ENCODE measurements at regions of chr5 and their contacts with region 1.

Region 1: GRCh38 chr5:122311961-122312590 is at the start of gene SNCAIP:
- DNase-seq: peak; percentile 59 to 84
- ATAC-seq: peak; percentile 65
- H3K4me3 ChIP-seq: peak within 1 kb of the TSS; percentile 69 to 81
- H3K27ac ChIP-seq: peak within 1 kb of the TSS; percentile 76
- H3K4me1 ChIP-seq: no peaks in the 10 kb centered on the region
- H3K27me3 ChIP-seq: no peaks in the 10 kb centered on the region
- total RNA-seq, gene SNCAIP: 9.7 to 14.7 TPM

Region 2: DNA sequence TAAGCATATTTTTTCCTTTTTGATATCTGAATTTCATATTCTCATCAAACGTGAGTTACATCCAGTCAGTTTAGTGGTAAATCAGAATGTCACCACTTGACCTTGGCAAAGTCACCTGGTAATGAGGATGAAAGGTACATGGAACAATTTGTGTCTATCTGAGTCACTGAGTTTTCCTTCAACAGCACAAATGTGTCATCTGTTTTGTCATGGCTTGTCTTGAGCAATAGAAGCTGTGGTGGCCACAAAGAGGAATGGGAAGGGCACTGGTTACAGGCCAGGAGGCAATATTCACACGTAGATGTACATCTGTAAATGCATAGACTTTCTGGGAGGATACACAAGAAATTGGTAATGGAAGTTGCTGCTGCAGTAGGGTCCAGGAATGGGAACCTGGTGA is 191.1 kb before region 1 on chr5:
- intact Hi-C with region 1: no loop called
- DNase-seq: no peak
- ATAC-seq: no peak
- H3K4me3 ChIP-seq: no peak overlapping the region
- H3K27ac ChIP-seq: no peak overlapping the region
- H3K4me1 ChIP-seq: peaks cover 0 to under 1% of the 10 kb centered on the region in 2 donors
- H3K27me3 ChIP-seq: no peaks in the 10 kb centered on the region

Region 3: GRCh38 chr5:122192497-122193496 is 119.3 kb before region 1 on chr5:
- intact Hi-C with region 1: loop called (anchors 5 to 10 kb)
- DNase-seq: no peak
- ATAC-seq: peak; percentile 68
- H3K4me3 ChIP-seq: no peak overlapping the region
- H3K27ac ChIP-seq: no peak overlapping the region
- H3K4me1 ChIP-seq: no peaks in the 10 kb centered on the region
- H3K27me3 ChIP-seq: no peaks in the 10 kb centered on the region

Region 4: DNA sequence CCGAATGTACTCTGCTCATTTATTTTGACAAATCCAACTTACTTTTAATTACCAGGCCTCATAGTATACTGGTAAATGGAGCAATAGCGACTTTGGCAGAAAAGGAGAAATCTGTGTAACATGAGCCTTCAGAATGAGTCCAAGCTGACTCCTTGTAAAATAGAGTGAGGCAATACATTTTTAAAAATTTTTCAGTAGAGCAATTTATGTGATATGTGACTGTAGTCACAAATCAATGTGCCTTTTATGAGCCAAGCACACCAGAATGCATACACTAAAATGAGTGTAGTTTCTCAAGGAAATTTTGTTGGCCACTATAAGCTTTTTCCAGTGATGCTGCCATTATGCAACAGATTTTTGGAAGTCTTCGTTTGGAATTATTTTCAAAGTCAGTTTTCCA is 73.7 kb after region 1 on chr5:
- intact Hi-C with region 1: loop called in 1 of 2 experiments (anchors 5 kb)
- DNase-seq: no peak
- ATAC-seq: peak; percentile 88
- H3K4me3 ChIP-seq: no peak overlapping the region
- H3K27ac ChIP-seq: no peak overlapping the region
- H3K4me1 ChIP-seq: peaks cover 0 to 3% of the 10 kb centered on the region in 2 donors
- H3K27me3 ChIP-seq: no peaks in the 10 kb centered on the region

Region 5: GRCh38 chr5:122415030-122415800 is 103.1 kb after region 1 on chr5:
- intact Hi-C with region 1: loop called in 1 of 2 experiments (anchors 10 kb)
- DNase-seq: peak in 1 of 2 donors; percentile 59
- ATAC-seq: peak; percentile 87
- H3K4me3 ChIP-seq: no peak overlapping the region
- H3K27ac ChIP-seq: no peak overlapping the region
- H3K4me1 ChIP-seq: no peaks in the 10 kb centered on the region
- H3K27me3 ChIP-seq: no peaks in the 10 kb centered on the region

Region 6: DNA sequence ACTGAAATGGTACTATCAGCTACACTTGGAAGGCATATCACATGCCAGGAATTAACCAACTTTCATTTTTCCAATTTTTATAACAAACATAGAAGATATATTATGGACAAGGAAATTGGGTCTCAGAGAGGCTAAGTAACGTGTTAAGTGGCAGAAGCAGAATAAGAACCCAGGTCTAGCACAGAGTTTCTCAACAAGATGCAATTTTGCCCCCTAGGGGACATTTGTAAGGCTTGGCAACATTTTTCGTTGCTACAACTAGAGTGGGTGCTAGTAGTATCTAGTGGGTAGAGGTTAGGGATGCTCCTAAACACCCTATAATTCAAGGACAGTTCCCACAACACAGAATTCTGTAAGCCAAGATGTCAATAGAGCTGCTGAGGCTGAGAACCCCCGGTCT is 180.6 kb after region 1 on chr5:
- intact Hi-C with region 1: loop called in 1 of 2 experiments (anchors 5 kb)
- DNase-seq: no peak
- ATAC-seq: no peak
- H3K4me3 ChIP-seq: no peak overlapping the region
- H3K27ac ChIP-seq: no peak overlapping the region
- H3K4me1 ChIP-seq: peaks cover 0 to 1% of the 10 kb centered on the region in 2 donors
- H3K27me3 ChIP-seq: no peaks in the 10 kb centered on the region

Region 7: DNA sequence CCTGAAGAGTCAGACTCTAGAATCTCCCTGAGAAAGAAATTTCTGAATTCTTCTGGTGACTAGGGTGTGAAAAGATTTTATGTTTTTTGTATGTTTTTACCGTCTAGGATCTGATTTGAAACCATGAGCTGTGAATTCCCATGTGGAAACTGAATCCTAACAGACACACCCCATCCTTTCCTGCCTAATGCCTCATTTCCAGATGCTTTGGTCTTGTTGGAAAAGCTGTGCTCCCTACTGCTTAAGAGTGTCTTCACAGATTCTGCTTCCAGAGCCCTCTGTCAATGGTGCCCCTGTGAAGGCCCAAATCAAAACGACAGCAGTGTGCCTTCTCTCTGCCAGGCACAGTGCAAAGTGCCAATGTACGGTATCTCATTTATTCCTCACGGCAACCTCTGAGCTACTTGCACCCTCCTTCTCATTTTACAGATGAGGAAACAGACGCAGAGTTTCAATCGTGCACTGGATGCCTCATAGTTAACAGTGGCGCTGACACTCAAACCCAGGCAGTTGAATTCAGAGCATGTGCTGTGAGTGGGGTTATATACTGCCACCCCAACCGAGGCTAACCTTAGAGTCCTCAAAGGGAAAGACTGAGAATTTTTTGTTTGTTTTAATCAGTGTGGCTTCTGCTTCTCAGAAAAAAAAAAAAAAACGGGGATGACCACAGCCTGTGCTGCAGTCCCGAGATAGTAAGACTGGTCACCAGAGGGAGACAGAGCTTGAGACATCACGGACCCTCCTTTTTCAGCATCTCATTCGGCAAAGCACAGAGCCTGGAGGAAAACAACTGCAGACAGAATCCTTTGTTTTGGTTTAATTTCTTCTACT is 188.4 kb after region 1 on chr5:
- intact Hi-C with region 1: loop called in 1 of 2 experiments (anchors 10 kb)
- DNase-seq: no peak
- ATAC-seq: peak; percentile 87
- H3K4me3 ChIP-seq: peak overlapping the region; percentile 13 to 36
- H3K27ac ChIP-seq: peak overlapping the region; percentile 53 to 72
- H3K4me1 ChIP-seq: peaks cover 0 to 4% of the 10 kb centered on the region in 2 donors
- H3K27me3 ChIP-seq: no peaks in the 10 kb centered on the region